ENCODE measurements at regions of chr10 and their contacts with region 1.

Region 1: GRCh38 chr10:62816331-62817120 is at the start of gene EGR2:
- DNase-seq: peak; percentile 87 to 99 (median 96)
- H3K4me3 ChIP-seq: peak within 1 kb of the TSS; percentile 91
- H3K4me3 Mint-ChIP-seq: peak within 1 kb of the TSS; percentile 91 to 100 (median 96)
- H3K27ac ChIP-seq: peak within 1 kb of the TSS; percentile 72
- H3K27ac Mint-ChIP-seq: peak within 1 kb of the TSS; percentile 89 to 99 (median 98)
- H3K4me1 ChIP-seq: peaks cover 39% of the 10 kb centered on the region
- H3K4me1 Mint-ChIP-seq: peaks cover 39 to 60% (median 46%) of the 10 kb centered on the region in 3 donors
- H3K27me3 ChIP-seq: peaks cover 18% of the 10 kb centered on the region
- H3K27me3 Mint-ChIP-seq: peaks cover 26 to 45% of the 10 kb centered on the region in 2 donors
- total RNA-seq, gene EGR2: 87.8 to 89.9 TPM

Region 2: GRCh38 chr10:62437696-62438095 is 378.8 kb before region 1 on chr10:
- CTCF ChIA-PET with region 1: interaction called, 12 read pairs
- POLR2A ChIA-PET with region 1: no interaction called
- DNase-seq: peak in 2 of 5 donors; percentile 46 to 58
- H3K4me3 ChIP-seq: no peak overlapping the region
- H3K4me3 Mint-ChIP-seq: no peak overlapping the region
- H3K27ac ChIP-seq: no peak overlapping the region
- H3K27ac Mint-ChIP-seq: no peak overlapping the region
- H3K4me1 ChIP-seq: no peaks in the 10 kb centered on the region
- H3K4me1 Mint-ChIP-seq: peaks cover 0 to 3% (median 2%) of the 10 kb centered on the region in 3 donors
- H3K27me3 ChIP-seq: no peaks in the 10 kb centered on the region
- H3K27me3 Mint-ChIP-seq: peaks cover 1 to 9% of the 10 kb centered on the region in 2 donors

Region 3: DNA sequence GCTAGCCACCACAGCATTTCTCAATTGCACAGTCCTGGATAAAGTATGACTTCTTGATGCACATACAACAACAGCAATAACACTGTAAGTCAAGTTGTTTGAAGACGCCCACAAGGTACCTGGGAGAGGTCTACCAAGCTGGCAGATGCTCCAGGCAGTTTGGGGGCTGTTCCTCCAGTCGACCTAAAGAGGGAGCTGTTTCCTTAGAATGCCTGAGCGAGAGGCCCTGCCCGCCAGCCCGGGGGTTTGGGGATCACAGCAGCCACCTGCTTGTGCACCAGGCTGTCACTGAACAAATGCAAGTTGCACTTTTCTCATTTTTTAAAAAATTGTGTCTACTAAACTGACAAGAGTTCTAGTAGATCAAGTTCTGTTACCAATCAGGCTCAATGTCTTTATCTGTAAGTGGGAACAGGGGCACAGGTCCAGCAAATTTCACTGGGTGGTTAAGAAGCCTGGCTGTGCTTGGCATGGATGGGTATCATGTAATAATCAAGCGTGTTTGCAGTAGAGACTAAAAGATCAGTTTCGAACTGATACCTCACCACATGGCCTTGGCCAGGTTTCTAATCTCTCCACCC is 205.8 kb before region 1 on chr10:
- CTCF ChIA-PET with region 1: interaction called, 91 read pairs
- POLR2A ChIA-PET with region 1: interaction called, 5 read pairs
- DNase-seq: peak; percentile 48 to 79 (median 68)
- H3K4me3 ChIP-seq: no peak overlapping the region
- H3K4me3 Mint-ChIP-seq: no peak overlapping the region
- H3K27ac ChIP-seq: no peak overlapping the region
- H3K27ac Mint-ChIP-seq: no peak overlapping the region
- H3K4me1 ChIP-seq: peaks cover 4% of the 10 kb centered on the region
- H3K4me1 Mint-ChIP-seq: peaks cover 9 to 17% (median 11%) of the 10 kb centered on the region in 3 donors
- H3K27me3 ChIP-seq: no peaks in the 10 kb centered on the region
- H3K27me3 Mint-ChIP-seq: peaks cover 3 to 12% of the 10 kb centered on the region in 2 donors

Region 4: DNA sequence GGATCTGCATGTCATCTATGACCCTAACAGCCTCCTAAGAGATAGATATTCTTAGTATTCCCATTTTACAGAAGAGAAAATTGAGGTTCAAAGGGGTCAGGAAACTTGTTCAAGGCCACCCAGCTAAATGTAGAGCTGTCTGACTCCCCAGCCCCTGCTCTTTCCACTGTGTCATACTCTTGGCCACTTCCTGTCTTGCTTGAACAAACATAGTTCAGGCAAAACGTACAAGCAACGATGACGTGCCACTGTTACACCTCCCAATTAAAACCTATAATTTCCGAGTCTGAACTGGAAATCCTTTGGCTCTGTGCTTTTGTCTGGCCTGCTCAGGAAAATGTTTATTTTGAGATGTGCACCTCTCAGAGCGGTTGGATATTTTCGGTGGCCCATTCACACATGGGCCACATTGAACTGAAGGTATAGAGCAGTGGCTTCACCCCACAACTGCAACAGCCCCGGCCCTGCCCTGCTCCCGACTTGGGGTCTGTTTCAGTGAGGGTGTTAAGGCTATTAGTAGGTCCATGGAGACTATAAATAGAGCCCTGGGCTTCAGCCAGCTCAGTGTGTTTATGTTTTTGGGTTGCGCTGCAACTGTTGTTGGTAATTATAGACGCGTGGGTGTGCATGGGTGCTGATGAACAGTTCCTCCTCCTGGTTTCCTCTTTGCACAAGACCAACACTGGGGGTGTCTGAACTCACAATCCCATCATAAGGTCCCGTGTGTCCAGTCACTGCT is 184.3 kb before region 1 on chr10:
- CTCF ChIA-PET with region 1: interaction called, 50 read pairs
- POLR2A ChIA-PET with region 1: interaction called, 17 read pairs
- DNase-seq: peak; percentile 40 to 85 (median 50)
- H3K4me3 ChIP-seq: peak overlapping the region; percentile 2
- H3K4me3 Mint-ChIP-seq: peak overlapping the region; percentile 11 to 84 (median 72)
- H3K27ac ChIP-seq: peak overlapping the region; percentile 68
- H3K27ac Mint-ChIP-seq: peak overlapping the region; percentile 65 to 99 (median 94)
- H3K4me1 ChIP-seq: peaks cover 29% of the 10 kb centered on the region
- H3K4me1 Mint-ChIP-seq: peaks cover 23 to 35% (median 23%) of the 10 kb centered on the region in 3 donors
- H3K27me3 ChIP-seq: no peaks in the 10 kb centered on the region
- H3K27me3 Mint-ChIP-seq: no peaks in the 10 kb centered on the region

Region 5: DNA sequence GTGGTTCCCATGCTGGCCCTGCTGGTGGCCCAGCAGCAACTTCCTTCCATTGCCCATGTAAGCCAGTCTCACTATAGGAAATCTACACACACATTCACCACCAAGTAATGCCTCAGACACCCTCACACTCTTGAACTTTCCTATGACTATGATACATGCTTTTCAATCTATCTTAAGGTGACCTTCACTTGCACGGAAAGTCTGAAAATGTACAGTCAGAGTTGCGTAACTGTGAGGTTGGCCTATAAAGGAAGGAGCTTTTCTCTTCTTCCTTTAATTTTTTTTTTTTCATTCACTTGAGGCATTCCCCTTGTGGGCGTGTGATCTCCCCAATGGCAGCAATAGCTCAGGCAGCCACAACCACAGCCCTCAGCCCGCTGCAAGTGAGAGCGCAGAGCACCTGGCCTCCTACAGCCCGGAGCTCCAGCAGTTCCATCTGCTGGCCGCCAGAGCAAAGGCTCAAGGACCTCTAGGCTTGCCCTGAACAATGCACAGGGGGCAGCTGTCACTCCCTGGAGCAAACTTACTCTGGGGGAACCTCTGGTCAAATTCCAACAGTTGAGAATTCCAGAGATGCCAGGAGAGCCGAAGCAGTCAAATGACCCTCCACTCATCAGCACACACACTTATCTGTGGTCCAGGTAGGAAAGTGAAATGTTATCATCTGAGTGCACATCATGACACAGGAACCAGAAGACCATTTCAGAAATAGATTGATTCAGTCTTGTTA is 135.2 kb before region 1 on chr10:
- CTCF ChIA-PET with region 1: interaction called, 16 read pairs
- POLR2A ChIA-PET with region 1: interaction called, 5 read pairs
- DNase-seq: peak; percentile 39 to 86 (median 64)
- H3K4me3 ChIP-seq: no peak overlapping the region
- H3K4me3 Mint-ChIP-seq: peak overlapping the region in 6 of 7 donors; percentile 2 to 76 (median 44)
- H3K27ac ChIP-seq: no peak overlapping the region
- H3K27ac Mint-ChIP-seq: peak overlapping the region in 7 of 8 donors; percentile 27 to 92 (median 84)
- H3K4me1 ChIP-seq: peaks cover 16% of the 10 kb centered on the region
- H3K4me1 Mint-ChIP-seq: peaks cover 20 to 40% (median 30%) of the 10 kb centered on the region in 3 donors
- H3K27me3 ChIP-seq: no peaks in the 10 kb centered on the region
- H3K27me3 Mint-ChIP-seq: no peaks in the 10 kb centered on the region

Region 6: DNA sequence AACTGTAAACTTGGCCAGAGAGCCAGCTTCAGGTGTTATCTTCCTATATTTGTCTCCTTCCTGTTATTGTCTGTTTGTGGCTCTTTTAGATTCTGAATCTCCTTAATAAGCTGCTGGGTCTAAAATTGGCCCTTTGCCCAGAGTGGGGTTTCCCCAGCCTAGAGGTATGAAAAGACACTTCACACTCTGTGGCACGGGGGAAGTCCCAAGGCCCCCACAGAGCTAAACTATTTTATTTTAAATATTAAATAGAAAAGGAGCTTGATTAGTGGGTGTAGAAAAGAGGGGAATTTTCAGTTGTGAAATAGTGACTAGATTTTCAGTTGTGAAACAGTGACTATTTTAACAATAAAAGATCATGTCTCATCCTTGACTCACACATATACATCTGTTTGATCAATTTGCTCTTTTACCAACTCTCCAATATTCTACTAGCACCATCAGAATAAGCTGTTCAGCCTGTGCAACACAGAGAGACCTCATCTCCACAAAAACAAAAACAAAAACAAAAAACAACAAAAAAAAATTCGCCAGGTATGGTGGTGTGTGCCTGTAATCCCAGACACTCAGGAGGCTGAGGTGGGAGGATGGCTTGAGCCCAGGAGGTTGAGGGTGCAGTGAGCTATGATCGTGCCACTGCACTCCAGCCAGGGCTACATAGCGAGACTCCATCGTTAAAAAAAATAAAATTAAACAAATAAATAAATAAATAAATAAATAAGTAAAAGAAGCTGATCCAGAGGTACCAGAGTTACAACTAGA is 36.9 kb before region 1 on chr10:
- CTCF ChIA-PET with region 1: interaction called, 16 read pairs
- POLR2A ChIA-PET with region 1: interaction called, 8 read pairs
- DNase-seq: peak; percentile 76 to 94 (median 85)
- H3K4me3 ChIP-seq: no peak overlapping the region
- H3K4me3 Mint-ChIP-seq: peak overlapping the region in 4 of 7 donors; percentile 0 to 60 (median 37)
- H3K27ac ChIP-seq: no peak overlapping the region
- H3K27ac Mint-ChIP-seq: peak overlapping the region; percentile 0 to 88 (median 56)
- H3K4me1 ChIP-seq: peaks cover 15% of the 10 kb centered on the region
- H3K4me1 Mint-ChIP-seq: peaks cover 22 to 37% (median 24%) of the 10 kb centered on the region in 3 donors
- H3K27me3 ChIP-seq: no peaks in the 10 kb centered on the region
- H3K27me3 Mint-ChIP-seq: peaks cover 0 to 6% of the 10 kb centered on the region in 2 donors

Region 7: GRCh38 chr10:62842983-62843382 is 26.5 kb after region 1 on chr10:
- CTCF ChIA-PET with region 1: no interaction called
- POLR2A ChIA-PET with region 1: no interaction called
- DNase-seq: no peak
- H3K4me3 ChIP-seq: no peak overlapping the region
- H3K4me3 Mint-ChIP-seq: no peak overlapping the region
- H3K27ac ChIP-seq: no peak overlapping the region
- H3K27ac Mint-ChIP-seq: no peak overlapping the region
- H3K4me1 ChIP-seq: no peaks in the 10 kb centered on the region
- H3K4me1 Mint-ChIP-seq: no peaks in the 10 kb centered on the region
- H3K27me3 ChIP-seq: no peaks in the 10 kb centered on the region
- H3K27me3 Mint-ChIP-seq: peaks cover 0 to 2% of the 10 kb centered on the region in 2 donors

Region 8: GRCh38 chr10:63083904-63084689 is 267.6 kb after region 1 on chr10:
- CTCF ChIA-PET with region 1: interaction called, 10 read pairs
- POLR2A ChIA-PET with region 1: no interaction called
- DNase-seq: peak; percentile 2 to 54 (median 39)
- H3K4me3 ChIP-seq: no peak overlapping the region
- H3K4me3 Mint-ChIP-seq: no peak overlapping the region
- H3K27ac ChIP-seq: no peak overlapping the region
- H3K27ac Mint-ChIP-seq: no peak overlapping the region
- H3K4me1 ChIP-seq: no peaks in the 10 kb centered on the region
- H3K4me1 Mint-ChIP-seq: no peaks in the 10 kb centered on the region
- H3K27me3 ChIP-seq: no peaks in the 10 kb centered on the region
- H3K27me3 Mint-ChIP-seq: peaks cover 3 to 12% of the 10 kb centered on the region in 2 donors